Activated T-helper 1 cell treated with anti-CD3 and anti-CD28 coated beads, Interleukin-12 subunit alpha, Interleukin-12 subunit beta, Interleukin-2, Interleukin-4 antibody, amounts not matched to agents 30 ng/mL and 10 ng/mL and 1 ng/mL, durations not matched to agents 14 hours and 24 hours and 36 hours (primary cell): ENCODE measurements at regions of chr19 and their contacts with region 1.

Region 1: DNA sequence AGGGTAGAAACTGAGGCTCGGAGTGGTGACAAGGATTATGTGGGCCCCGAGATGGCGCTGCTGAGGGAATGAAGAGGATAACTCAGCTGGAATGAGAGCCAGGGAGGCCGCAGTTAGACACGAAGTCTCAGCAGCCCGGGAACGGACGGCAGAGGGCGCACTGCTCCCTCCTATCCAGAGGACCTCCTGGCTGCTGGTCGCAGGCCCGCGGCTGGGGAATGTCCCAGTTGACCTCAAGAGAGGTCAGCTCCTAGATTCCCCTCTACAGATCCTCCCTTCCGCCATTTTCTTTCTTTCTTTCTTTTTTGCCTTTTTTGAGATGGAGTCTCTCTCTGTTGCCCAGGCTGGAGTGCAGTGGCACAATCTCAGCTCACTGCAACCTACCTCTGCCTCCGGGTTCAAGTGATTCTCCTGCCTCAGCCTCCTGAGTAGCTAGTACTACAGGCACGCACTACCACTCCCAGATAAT is 24.1 kb upstream of the ASPDH start:
- DNase-seq: peak; percentile 31
- H3K4me3 Mint-ChIP-seq: no peak overlapping the region
- H3K27ac Mint-ChIP-seq: no peak overlapping the region
- H3K4me1 Mint-ChIP-seq: no peaks in the 10 kb centered on the region
- H3K27me3 Mint-ChIP-seq: peaks cover 4% of the 10 kb centered on the region

Region 2: GRCh38 chr19:50556282-50557008 is 18.6 kb after region 1 on chr19:
- intact Hi-C with region 1: loop called (anchors 1 kb)
- DNase-seq: peak; percentile 72
- H3K4me3 Mint-ChIP-seq: peak overlapping the region; percentile 94
- H3K27ac Mint-ChIP-seq: peak overlapping the region; percentile 72
- H3K4me1 Mint-ChIP-seq: peaks cover 5% of the 10 kb centered on the region
- H3K27me3 Mint-ChIP-seq: peaks cover 36% of the 10 kb centered on the region

Region 3: DNA sequence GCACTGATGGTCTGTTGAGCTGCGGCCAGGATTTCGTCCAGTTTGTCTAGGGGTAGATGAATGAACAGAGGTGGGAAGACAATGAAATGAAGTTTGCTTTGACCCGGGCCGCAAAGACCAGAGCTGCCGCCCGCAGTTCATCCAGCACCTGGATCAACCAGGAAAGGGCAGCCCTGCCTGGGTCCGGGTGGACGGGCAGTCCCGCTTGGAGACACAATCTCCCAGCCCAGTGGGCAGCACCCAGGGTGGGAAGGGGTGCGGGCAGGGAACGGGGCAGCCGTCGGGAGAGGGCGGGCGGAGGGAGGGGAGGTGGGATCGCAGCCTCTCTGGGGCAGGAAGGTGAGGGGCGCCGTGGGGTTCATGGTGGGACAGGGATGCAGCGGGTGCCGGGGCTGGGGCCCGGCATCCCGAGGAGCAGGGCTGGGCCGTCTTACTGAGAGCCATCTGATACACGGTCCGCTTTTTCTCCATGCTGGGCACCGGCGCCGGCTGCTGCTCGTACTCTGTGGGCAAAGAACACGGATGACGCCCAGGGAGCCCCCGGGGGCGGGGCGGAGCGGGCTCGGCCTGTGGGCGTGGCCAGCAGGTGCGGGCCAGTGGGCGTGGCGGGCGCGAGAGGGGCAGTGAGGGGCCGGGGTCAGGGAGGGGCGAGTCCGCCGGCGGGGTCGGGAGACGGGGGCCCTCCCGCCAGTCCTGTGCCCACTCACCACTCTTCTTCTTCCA is 148.7 kb after region 1 on chr19:
- intact Hi-C with region 1: no loop called
- DNase-seq: no peak
- H3K4me3 Mint-ChIP-seq: no peak overlapping the region
- H3K27ac Mint-ChIP-seq: no peak overlapping the region
- H3K4me1 Mint-ChIP-seq: no peaks in the 10 kb centered on the region
- H3K27me3 Mint-ChIP-seq: peaks cover 8% of the 10 kb centered on the region